Caco-2 (cell line): ENCODE measurements at regions of chr13 and their contacts with region 1.

Region 1: DNA sequence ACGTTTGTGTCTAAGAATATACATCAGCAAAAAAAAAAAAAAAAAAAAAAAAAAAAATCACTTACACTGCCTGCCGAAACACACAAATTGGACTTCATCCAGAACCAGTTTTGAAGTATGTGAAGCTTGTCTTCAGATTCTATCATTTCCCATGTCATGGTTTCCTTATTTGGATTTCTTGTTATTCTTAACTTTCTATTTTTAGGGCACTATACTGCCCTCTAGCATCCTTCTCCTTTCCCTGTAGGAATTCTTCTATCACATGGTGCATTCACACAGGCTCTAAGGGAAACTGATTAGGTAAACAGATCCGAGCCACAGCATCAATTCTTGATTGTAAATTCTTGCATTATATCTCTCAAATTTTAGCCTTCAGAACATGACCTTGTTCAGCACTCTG is 1507.5 kb downstream of the OLFM4 start:
- DNase-seq: peak in 1 of 2 experiments; percentile 25
- H3K4me3 ChIP-seq: no peak overlapping the region
- H3K4me3 Mint-ChIP-seq: no peak overlapping the region
- H3K27ac Mint-ChIP-seq: no peak overlapping the region
- H3K4me1 ChIP-seq: no peaks in the 10 kb centered on the region
- H3K4me1 Mint-ChIP-seq: no peaks in the 10 kb centered on the region
- H3K27me3 ChIP-seq: no peaks in the 10 kb centered on the region
- H3K27me3 Mint-ChIP-seq: peaks cover 6% of the 10 kb centered on the region
- CTCF ChIP-seq: peak in 1 of 2 experiments; percentile 64

Region 2: GRCh38 chr13:53782488-53782961 is 753.6 kb before region 1 on chr13:
- CTCF ChIA-PET with region 1: no interaction called
- POLR2A ChIA-PET with region 1: no interaction called
- intact Hi-C with region 1: loop called (anchors 2 kb)
- DNase-seq: peak in 1 of 2 experiments; percentile 52
- H3K4me3 ChIP-seq: no peak overlapping the region
- H3K4me3 Mint-ChIP-seq: no peak overlapping the region
- H3K27ac Mint-ChIP-seq: no peak overlapping the region
- H3K4me1 ChIP-seq: no peaks in the 10 kb centered on the region
- H3K4me1 Mint-ChIP-seq: no peaks in the 10 kb centered on the region
- H3K27me3 ChIP-seq: no peaks in the 10 kb centered on the region; the same call in 1 of the 2 replicates
- H3K27me3 Mint-ChIP-seq: peaks cover 11% of the 10 kb centered on the region
- CTCF ChIP-seq: peak; percentile 73 to 83

Region 3: GRCh38 chr13:54185785-54186184 is 350.3 kb before region 1 on chr13:
- CTCF ChIA-PET with region 1: no interaction called
- POLR2A ChIA-PET with region 1: no interaction called
- intact Hi-C with region 1: loop called (anchors 10 kb)
- DNase-seq: peak in 1 of 2 experiments; percentile 2
- H3K4me3 ChIP-seq: no peak overlapping the region
- H3K4me3 Mint-ChIP-seq: no peak overlapping the region
- H3K27ac Mint-ChIP-seq: no peak overlapping the region
- H3K4me1 ChIP-seq: no peaks in the 10 kb centered on the region
- H3K4me1 Mint-ChIP-seq: no peaks in the 10 kb centered on the region
- H3K27me3 ChIP-seq: no peaks in the 10 kb centered on the region
- H3K27me3 Mint-ChIP-seq: peaks cover 12% of the 10 kb centered on the region
- CTCF ChIP-seq: peak; percentile 11 to 24

Region 4: GRCh38 chr13:54305377-54305776 is 230.7 kb before region 1 on chr13:
- CTCF ChIA-PET with region 1: no interaction called
- POLR2A ChIA-PET with region 1: no interaction called
- intact Hi-C with region 1: loop called (anchors 10 kb)
- DNase-seq: no peak
- H3K4me3 ChIP-seq: no peak overlapping the region
- H3K4me3 Mint-ChIP-seq: no peak overlapping the region
- H3K27ac Mint-ChIP-seq: no peak overlapping the region
- H3K4me1 ChIP-seq: no peaks in the 10 kb centered on the region
- H3K4me1 Mint-ChIP-seq: no peaks in the 10 kb centered on the region
- H3K27me3 ChIP-seq: no peaks in the 10 kb centered on the region
- H3K27me3 Mint-ChIP-seq: peaks cover 5% of the 10 kb centered on the region
- CTCF ChIP-seq: peak; percentile 5 to 25

Region 5: GRCh38 chr13:54449922-54450321 is 86.2 kb before region 1 on chr13:
- CTCF ChIA-PET with region 1: no interaction called
- POLR2A ChIA-PET with region 1: no interaction called
- intact Hi-C with region 1: loop called (anchors 1 kb)
- DNase-seq: no peak
- H3K4me3 ChIP-seq: no peak overlapping the region
- H3K4me3 Mint-ChIP-seq: no peak overlapping the region
- H3K27ac Mint-ChIP-seq: no peak overlapping the region
- H3K4me1 ChIP-seq: no peaks in the 10 kb centered on the region
- H3K4me1 Mint-ChIP-seq: no peaks in the 10 kb centered on the region
- H3K27me3 ChIP-seq: no peaks in the 10 kb centered on the region
- H3K27me3 Mint-ChIP-seq: no peaks in the 10 kb centered on the region
- CTCF ChIP-seq: peak; percentile 36 to 43

Region 6: DNA sequence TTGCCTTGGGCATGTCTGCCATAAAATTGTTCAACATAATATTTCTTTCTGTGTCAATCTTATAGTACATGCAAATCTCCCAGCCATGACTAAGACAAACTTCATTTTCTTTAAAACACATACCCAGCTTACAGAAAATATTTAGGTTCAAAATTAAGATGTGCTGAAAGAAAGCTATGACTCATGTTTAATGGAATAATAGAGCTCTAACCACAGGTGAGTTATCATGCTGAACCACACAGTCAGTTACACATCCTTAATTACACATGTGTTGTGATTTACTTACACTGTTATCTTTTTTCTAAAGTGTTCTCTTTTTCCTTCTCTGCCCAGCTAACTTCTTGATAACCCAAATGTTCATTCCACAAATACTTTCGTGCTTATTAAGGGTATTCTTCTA is 323.7 kb after region 1 on chr13:
- CTCF ChIA-PET with region 1: no interaction called
- POLR2A ChIA-PET with region 1: no interaction called
- intact Hi-C with region 1: no loop called
- DNase-seq: no peak
- H3K4me3 ChIP-seq: no peak overlapping the region
- H3K4me3 Mint-ChIP-seq: no peak overlapping the region
- H3K27ac Mint-ChIP-seq: no peak overlapping the region
- H3K4me1 ChIP-seq: no peaks in the 10 kb centered on the region
- H3K4me1 Mint-ChIP-seq: no peaks in the 10 kb centered on the region
- H3K27me3 ChIP-seq: no peaks in the 10 kb centered on the region
- H3K27me3 Mint-ChIP-seq: peaks cover 6% of the 10 kb centered on the region
- CTCF ChIP-seq: no peak